Head of caudate nucleus (tissue), 42 donors: ENCODE measurements at regions of chr9 and their contacts with region 1.

Region 1: DNA sequence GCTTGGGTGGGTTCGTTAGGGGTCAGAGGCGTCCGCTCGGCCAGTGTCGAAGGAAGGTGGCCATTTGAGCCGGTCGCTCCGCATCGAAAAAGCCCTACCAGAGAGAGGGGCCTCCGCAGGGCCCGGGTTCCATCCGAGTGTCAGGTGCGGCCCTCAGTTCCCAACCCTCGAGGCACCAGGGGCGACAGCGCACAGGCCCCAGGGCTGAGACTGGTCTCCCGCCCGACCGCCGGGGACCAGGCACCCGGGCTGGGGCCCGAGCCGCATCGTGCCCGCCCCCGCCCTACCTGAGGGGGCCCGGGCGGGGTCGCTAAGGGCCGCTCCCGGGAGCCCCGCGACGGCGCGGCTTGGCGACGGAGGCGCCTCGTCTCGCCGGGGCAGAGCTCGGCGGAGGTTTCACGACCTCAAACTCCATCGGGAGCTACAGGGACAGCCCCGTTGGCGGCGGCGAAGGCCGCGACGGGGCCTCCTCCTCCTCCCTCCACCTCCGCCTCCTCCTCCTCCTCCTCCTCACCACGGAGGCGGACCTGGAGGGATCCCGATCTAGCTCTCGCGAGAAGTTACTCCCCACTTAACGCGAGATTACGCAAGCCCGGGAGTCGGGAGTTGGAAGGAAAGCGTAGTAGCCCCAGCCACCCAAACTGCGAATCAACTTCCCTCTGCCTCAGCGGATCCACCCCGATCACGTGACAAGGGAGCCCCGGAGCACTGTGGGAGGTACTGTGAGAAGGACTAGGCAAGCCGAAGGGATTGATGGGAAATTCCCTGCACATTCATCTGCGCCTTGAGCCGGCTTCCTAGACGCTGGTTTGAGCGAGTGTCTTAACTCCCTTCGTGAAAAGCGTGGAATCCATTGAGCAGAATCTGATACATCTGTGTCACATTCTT is at the start of gene RC3H2:
- DNase-seq: peak; percentile 98 to 100 (median 100)

Region 2: DNA sequence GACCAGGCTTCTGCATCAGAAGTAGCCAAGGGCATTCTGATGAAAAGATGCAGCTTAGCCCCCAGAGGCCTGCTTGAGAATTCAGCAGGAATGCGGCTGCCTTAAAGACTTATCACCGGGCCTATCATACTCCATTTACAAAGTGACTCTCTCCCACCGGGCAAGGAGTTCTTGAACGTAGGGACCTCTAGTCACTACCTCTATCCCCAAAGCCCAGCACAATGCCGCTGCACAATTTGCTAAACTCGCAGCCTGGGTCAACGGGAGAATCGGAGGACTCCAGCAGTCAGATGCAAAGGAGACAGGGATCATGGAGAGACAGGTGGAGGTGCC is 77.3 kb before region 1 on chr9:
- intact Hi-C with region 1: loop called (anchors 2 kb)
- DNase-seq: peak in 3 of 42 donors; percentile 16 to 20 (median 20)

Region 3: DNA sequence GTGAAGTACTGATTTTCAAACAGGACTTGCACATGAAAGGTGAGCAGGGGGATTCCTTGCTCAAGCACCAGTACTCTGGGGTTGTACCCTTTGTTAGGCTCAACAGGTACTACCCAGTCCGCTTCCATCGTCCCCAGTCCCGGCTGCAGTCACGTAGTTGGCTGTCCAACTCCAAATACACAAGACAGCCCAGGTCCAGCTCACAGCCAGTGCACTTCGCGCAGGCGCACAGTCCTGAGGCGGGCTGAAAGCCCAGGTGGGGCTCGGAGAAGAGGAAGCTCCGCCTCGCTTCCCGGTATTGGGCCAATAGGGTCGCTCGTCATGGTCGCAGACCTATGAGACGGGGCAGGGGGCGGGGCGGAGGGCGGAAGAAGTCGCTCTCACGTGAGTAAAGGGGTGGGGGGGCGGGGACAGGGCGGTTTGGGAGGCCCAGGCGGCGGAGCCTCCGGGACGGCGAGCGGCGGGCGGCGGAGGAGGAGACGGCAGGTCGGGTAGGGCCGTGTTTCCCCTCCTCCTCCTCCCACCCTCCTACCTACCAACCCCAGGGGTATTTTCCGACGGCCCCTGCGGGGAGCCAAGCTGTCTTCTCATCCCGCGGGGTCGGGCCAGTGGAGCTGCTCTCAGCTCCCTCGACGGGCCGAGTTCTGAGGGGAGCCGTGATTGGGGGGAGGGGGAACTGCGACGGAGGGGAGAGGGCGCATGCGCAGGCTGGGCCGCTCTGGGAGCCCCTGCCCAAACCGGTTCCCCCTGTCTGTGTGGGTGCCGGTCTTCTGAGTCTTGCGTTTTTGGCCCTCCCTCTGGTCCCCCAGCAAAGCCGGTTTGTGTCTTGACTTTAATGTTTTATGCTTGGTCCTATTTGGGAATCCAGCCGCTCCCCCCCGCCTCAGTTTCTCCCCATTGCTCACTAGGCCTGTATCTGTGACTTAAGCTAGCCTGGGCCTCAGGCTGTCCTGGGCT is 35.8 kb after region 1 on chr9 and contains the start of gene RABGAP1:
- intact Hi-C with region 1: loop called (anchors 2 kb)
- DNase-seq: peak; percentile 97 to 100 (median 99)